Activated CD4-positive, alpha-beta T cell treated with anti-CD3 and anti-CD28 coated beads for 36 hours (primary cell): ENCODE measurements at regions of chr9 and their contacts with region 1.

Region 1: GRCh38 chr9:136400038-136400834 is at the start of gene SNAPC4:
- DNase-seq: peak; percentile 93
- ATAC-seq: peak; percentile 68
- H3K4me3 Mint-ChIP-seq: peak within 1 kb of the TSS; percentile 86
- H3K27ac Mint-ChIP-seq: peak within 1 kb of the TSS; percentile 80
- H3K4me1 Mint-ChIP-seq: peaks cover 50% of the 10 kb centered on the region
- H3K27me3 Mint-ChIP-seq: no peaks in the 10 kb centered on the region
- total RNA-seq, gene SNAPC4: 12.4 to 16.8 TPM

Region 2: DNA sequence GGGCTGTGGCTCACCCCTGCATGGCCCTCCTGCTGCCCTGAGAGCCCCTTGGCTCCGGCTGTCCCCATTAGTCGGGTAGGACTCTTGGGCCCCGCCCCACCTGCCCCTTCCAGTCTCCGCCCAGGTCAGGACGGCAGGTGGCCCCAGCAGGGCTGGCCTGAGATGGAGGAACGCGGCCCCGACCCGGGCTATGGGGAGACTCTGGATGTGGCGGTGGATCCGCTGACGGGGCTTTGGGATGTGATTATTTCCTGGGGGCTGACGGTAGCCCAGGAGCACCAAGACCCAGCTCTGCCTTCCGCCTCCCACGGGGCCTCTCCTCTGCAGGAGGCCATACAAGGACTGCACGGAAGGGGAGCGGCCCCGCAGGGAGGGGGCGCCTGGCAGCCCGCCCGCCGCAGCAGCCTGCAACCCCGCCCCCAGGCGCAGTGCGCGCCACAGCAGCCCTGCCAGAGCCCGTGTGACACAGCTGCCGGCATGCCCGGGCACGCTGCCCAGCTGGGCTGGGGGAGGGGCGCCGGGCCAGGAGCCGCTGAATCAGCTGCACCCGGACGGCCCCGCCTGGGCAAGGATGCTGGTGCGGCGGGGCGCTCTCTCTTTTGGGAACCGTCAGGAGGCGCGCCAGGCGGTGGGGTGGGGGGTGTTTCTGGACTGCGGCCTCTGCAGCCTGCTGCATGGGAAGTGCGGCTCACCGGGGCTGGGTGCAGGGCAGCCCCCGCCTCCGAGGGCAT is 290.7 kb before region 1 on chr9:
- CTCF ChIA-PET with region 1: no interaction called
- POLR2A ChIA-PET with region 1: no interaction called
- intact Hi-C with region 1: loop called in 1 of 2 experiments (anchors 5 kb)
- DNase-seq: peak; percentile 97
- ATAC-seq: peak; percentile 88
- H3K4me3 Mint-ChIP-seq: peak overlapping the region; percentile 78
- H3K27ac Mint-ChIP-seq: peak overlapping the region; percentile 97
- H3K4me1 Mint-ChIP-seq: peaks cover 71% of the 10 kb centered on the region
- H3K27me3 Mint-ChIP-seq: no peaks in the 10 kb centered on the region

Region 3: DNA sequence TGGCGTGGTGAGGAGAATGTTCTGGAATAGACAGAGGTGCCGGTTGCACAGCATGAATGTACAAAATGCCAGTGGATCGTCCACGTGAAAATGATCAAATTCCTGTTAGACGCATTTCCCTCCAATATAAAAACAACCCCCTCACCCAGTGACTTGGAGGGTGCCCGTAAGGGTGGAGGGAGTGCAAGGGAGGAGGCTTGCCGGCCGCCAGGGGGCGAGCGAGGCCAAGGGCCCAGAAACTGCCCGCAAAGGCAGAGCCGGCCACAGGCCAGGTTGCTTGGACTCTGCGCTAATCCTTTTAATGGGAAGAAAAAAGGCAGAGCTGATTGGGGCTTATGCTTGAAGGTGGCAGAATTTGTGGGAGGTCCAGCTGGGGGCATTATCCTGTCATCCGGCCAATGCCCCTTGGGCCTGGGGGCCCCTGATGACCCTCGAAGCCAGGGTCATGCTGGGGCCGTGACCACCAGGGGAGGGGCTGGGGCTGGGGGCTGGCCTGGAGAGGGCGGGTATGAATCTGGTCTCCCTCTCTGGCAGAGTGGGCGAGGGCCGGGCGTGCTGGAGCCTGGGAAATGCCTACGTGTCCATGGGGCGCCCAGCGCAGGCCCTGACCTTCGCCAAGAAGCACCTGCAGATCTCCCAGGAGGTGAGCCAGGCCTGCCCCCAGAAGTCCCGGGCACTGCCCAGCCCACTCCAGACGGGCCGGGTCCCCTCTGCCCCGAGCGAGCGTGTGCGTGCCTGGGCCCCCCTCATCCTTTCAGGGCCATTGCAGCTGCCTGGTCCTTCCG is 60.9 kb before region 1 on chr9:
- CTCF ChIA-PET with region 1: no interaction called
- POLR2A ChIA-PET with region 1: no interaction called
- intact Hi-C with region 1: loop called in 1 of 2 experiments (anchors 1 kb)
- DNase-seq: peak; percentile 59
- ATAC-seq: no peak
- H3K4me3 Mint-ChIP-seq: no peak overlapping the region
- H3K27ac Mint-ChIP-seq: no peak overlapping the region
- H3K4me1 Mint-ChIP-seq: no peaks in the 10 kb centered on the region
- H3K27me3 Mint-ChIP-seq: no peaks in the 10 kb centered on the region

Region 4: DNA sequence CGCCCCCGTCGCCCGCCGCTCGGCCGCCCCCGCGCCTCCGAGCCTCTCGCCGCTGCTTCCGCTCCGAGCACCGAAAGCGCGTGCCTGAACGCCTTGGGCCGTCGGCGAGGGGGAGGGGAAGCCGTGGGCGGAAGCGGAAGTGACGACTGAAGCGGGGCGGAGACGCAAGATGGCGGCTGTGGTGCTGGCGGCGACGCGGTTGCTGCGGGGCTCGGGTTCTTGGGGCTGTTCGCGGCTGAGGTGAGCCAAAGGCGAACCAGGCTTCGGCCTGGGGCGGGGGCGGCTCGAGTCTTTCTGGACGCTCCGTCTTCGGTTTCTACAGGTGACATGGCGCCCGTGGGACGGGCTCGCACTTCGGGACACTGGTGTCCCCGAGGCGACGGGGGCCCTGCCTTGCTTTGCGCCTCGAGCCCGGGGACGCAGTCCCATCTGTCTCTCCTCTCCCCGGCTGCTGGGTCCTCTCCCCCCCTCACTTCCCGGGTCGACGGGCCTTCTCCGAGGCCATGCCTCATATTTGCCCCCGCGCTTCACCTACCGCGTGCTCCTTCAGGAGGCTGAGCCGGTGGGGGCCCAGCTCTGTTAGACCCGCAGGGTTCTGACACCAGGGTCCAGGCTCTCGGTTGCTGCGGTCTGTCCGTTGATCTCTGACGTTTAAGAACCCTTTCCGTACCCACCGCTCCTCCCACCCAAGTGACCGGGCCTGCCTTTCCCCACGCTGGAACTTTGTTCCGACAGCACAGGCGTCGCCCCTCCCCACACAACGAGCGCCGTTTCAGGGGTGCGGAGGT is 10.5 kb after region 1 on chr9 and contains the starts of genes ENTR1 and PMPCA:
- CTCF ChIA-PET with region 1: interaction called, 14 read pairs
- POLR2A ChIA-PET with region 1: interaction called, 3 read pairs
- intact Hi-C with region 1: loop called (anchors 1 kb)
- DNase-seq: peak; percentile 98
- ATAC-seq: peak; percentile 75
- H3K4me3 Mint-ChIP-seq: peak within 1 kb of the TSS; percentile 90
- H3K27ac Mint-ChIP-seq: peak within 1 kb of the TSS; percentile 94
- H3K4me1 Mint-ChIP-seq: peaks cover 49% of the 10 kb centered on the region
- H3K27me3 Mint-ChIP-seq: no peaks in the 10 kb centered on the region
- total RNA-seq, gene ENTR1: 57.2 to 67.7 TPM
- total RNA-seq, gene PMPCA: 88.0 to 113 TPM

Region 5: DNA sequence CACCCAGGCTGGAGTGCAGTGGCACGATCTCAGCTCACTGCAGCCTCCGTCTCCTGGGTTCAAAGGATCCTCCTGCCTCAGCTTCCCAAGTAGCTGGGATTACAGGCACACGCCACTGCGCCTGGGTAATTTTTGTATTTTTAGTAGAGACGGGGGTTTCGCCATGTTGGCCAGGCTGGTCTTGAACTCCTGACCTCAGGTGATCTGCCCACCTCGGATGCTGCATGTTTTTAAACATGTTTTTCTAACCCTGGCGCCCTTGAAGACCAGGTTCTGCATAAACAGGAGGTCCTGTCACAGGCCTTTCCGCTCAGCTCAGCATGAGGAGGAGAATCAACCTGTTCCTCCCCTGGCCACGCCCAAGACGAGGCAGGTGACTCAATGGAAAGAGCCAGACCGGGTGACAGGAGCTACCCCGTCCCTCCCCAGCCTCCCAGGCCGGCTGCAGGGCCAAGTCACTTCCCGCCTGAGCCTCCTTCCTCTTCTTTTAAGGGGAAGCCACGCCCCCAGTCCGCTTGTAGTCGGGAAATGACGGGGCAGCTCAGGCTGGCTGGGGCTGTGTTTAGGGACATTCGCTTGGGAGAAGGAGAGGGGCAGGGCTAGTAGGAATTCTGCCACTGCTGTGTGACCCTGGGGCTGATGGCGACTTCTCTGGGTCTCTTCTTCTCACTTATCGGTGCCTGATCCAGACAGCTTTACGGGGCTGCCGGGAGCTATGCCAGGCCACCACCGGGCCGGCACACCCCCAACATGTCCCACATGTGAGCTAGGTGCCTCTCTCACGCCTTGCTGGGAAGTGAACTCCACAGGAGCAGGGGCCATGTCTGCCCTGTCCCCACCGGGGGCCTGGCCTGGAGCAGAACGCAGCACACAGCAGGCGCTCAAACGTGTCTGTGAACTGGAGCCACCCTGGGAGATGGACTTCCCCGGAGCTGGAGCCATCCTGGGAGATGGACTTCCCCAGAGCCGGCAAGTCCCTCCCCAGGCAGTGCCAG is 139.5 kb after region 1 on chr9:
- CTCF ChIA-PET with region 1: interaction called, 3 read pairs
- POLR2A ChIA-PET with region 1: interaction called, 4 read pairs
- intact Hi-C with region 1: loop called in 1 of 2 experiments (anchors 2 kb)
- DNase-seq: peak; percentile 99
- ATAC-seq: peak; percentile 81
- H3K4me3 Mint-ChIP-seq: peak overlapping the region; percentile 65
- H3K27ac Mint-ChIP-seq: peak overlapping the region; percentile 99
- H3K4me1 Mint-ChIP-seq: peaks cover 74% of the 10 kb centered on the region
- H3K27me3 Mint-ChIP-seq: no peaks in the 10 kb centered on the region